ENCODE measurements at regions of chr17 and their contacts with region 1.

Region 1: DNA sequence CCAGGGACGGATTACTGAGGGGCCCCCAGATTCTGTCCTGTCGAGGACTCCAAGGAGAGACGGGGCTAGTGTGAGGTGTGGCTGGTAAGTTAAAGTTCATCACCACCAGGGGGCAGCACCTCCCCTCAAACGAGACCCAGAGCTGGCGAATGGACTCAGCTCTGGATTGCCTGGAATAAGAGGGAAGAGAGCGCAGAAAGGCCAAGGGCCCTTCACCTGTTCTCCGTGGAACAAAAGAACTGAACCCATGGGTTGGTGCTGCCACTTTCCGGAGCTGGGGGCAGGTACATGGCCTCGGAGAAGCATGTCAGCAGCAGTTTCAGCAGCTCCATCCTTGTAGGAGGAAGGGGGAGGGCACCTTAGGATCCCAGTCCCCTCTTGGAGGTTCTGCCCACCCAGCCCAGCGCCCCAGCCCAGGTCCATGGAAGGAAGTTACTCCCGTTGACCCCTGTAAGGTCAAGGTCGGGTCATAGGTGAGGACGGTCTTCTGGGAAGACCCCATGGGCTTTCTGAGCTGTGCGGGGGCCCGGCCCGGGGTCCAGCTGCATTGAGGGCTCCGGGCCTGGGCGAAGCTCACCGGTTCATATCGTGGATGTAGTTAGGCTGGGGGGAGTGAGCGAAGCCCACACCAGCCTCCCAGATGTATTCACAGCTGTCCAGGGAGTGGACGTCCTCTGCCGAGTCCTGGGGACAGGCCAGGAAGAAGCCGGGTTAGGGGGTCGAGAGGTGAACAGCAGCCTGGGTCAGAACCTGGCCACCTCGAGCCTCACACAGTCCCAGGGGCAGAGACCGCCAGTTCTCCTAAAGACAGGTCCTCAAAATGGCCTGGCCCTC is 10.7 kb downstream of the HID1 start:
- DNase-seq: peak; percentile 71
- ATAC-seq: peak; percentile 69
- H3K4me3 Mint-ChIP-seq: no peak overlapping the region
- H3K27ac Mint-ChIP-seq: no peak overlapping the region
- H3K4me1 Mint-ChIP-seq: peaks cover 9% of the 10 kb centered on the region
- H3K27me3 Mint-ChIP-seq: peaks cover 4% of the 10 kb centered on the region
- CTCF ChIP-seq: peak; percentile 58

Region 2: GRCh38 chr17:73595479-73595878 is 1366.4 kb before region 1 on chr17:
- CTCF ChIA-PET with region 1: no interaction called
- POLR2A ChIA-PET with region 1: no interaction called
- intact Hi-C with region 1: no loop called
- DNase-seq: peak; percentile 35
- ATAC-seq: no peak
- H3K4me3 Mint-ChIP-seq: no peak overlapping the region
- H3K27ac Mint-ChIP-seq: peak overlapping the region; percentile 90
- H3K4me1 Mint-ChIP-seq: peaks cover 84% of the 10 kb centered on the region
- H3K27me3 Mint-ChIP-seq: no peaks in the 10 kb centered on the region
- CTCF ChIP-seq: no peak

Region 3: DNA sequence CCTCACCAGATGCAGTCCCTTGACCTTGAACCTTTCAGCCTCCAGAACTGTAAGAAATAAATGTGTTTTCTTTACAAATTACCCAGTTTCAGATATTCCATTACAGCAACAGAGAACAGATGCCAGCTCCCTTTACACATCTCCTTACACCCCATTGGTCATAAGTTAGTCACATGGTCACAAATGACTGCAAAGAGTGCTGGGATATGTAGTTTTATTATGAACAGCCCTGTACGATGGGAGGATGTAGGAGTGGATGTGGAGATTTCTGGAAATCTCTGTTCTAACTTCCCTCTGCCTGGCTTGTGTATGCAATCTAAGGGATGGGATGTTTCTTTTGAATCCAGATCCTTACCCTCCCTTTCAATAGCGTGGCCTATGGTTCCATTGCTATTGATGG is 771.7 kb before region 1 on chr17:
- CTCF ChIA-PET with region 1: no interaction called
- POLR2A ChIA-PET with region 1: no interaction called
- intact Hi-C with region 1: no loop called
- DNase-seq: no peak
- ATAC-seq: peak; percentile 77
- H3K4me3 Mint-ChIP-seq: no peak overlapping the region
- H3K27ac Mint-ChIP-seq: no peak overlapping the region
- H3K4me1 Mint-ChIP-seq: no peaks in the 10 kb centered on the region
- H3K27me3 Mint-ChIP-seq: peaks cover 28% of the 10 kb centered on the region
- CTCF ChIP-seq: no peak

Region 4: GRCh38 chr17:74748529-74749365 is 213.1 kb before region 1 on chr17 and contains the start of gene NHERF1:
- CTCF ChIA-PET with region 1: interaction called, 3 read pairs
- POLR2A ChIA-PET with region 1: interaction called, 3 read pairs
- intact Hi-C with region 1: loop called (anchors 1 kb)
- DNase-seq: peak; percentile 97
- ATAC-seq: peak; percentile 96
- H3K4me3 Mint-ChIP-seq: peak within 1 kb of the TSS; percentile 89
- H3K27ac Mint-ChIP-seq: peak within 1 kb of the TSS; percentile 72
- H3K4me1 Mint-ChIP-seq: peaks cover 64% of the 10 kb centered on the region
- H3K27me3 Mint-ChIP-seq: no peaks in the 10 kb centered on the region
- CTCF ChIP-seq: no peak
- total RNA-seq, gene NHERF1: 33.3 and 34.5 TPM in 2 replicates

Region 5: DNA sequence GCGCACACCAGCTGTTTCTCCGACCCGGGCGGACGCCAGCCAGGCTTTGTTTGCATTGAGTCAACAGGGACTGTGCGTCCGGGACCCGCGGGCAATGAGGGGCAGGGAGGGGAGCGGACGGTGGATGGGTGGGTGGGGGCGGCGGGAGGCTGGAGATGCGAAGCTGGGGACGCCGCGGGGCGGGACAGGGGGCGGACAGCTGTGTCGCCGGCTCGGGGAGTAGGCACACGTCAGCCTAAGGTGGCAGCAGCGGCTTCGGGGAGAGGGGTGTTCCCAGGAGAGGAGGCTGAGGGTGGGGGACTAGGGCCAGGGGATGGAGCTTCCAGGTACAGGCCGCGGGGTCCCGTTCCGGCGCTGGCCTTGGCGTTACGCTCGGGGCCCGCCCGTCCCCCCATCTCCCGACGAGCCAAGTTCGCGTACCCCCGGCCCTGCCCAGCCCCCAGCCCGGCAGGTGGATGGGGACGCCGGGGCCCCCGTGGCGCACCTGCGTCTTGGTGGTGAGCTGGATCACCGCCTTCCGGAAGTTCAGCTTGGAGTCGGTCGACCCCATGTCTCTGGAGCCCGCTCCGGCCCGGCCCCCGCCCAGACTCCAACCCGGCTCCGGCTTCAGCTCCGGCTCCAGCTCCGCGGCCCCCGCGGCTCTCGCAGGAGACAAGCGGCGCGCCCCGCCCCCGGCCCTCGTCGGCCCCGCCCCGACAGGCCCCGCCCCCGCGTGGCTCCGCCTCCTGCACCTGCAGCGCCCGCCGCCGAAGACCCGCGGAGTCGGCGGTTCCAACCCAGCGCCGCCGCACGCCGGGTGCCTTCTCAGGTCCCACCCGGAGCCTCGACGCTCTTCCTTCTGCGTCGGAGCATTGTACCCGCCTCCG is 10.5 kb after region 1 on chr17 and contains the start of gene HID1:
- CTCF ChIA-PET with region 1: interaction called, 37 read pairs
- POLR2A ChIA-PET with region 1: interaction called, 9 read pairs
- intact Hi-C with region 1: no loop called
- DNase-seq: peak; percentile 69
- ATAC-seq: peak; percentile 92
- H3K4me3 Mint-ChIP-seq: peak within 1 kb of the TSS; percentile 76
- H3K27ac Mint-ChIP-seq: peak within 1 kb of the TSS; percentile 2
- H3K4me1 Mint-ChIP-seq: peaks cover 6% of the 10 kb centered on the region
- H3K27me3 Mint-ChIP-seq: peaks cover 19% of the 10 kb centered on the region
- CTCF ChIP-seq: no peak
- total RNA-seq, gene HID1: 1.5 and 2.1 TPM in 2 replicates

Region 6: GRCh38 chr17:75046582-75047289 is 84.9 kb after region 1 on chr17 and contains the starts of genes ATP5PD and KCTD2:
- CTCF ChIA-PET with region 1: interaction called, 12 read pairs
- POLR2A ChIA-PET with region 1: interaction called, 6 read pairs
- intact Hi-C with region 1: loop called (anchors 2 kb)
- DNase-seq: peak; percentile 91
- ATAC-seq: peak; percentile 95
- H3K4me3 Mint-ChIP-seq: peak within 1 kb of the TSS; percentile 97
- H3K27ac Mint-ChIP-seq: peak within 1 kb of the TSS; percentile 86
- H3K4me1 Mint-ChIP-seq: peaks cover 37% of the 10 kb centered on the region
- H3K27me3 Mint-ChIP-seq: no peaks in the 10 kb centered on the region
- CTCF ChIP-seq: no peak
- total RNA-seq, gene ATP5PD: 158 and 181 TPM in 2 replicates
- total RNA-seq, gene KCTD2: 19.5 and 20.2 TPM in 2 replicates

Region 7: GRCh38 chr17:75199886-75200618 is 238.2 kb after region 1 on chr17:
- CTCF ChIA-PET with region 1: interaction called, 78 read pairs
- POLR2A ChIA-PET with region 1: interaction called, 9 read pairs
- intact Hi-C with region 1: loop called (anchors 1 kb)
- DNase-seq: no peak
- ATAC-seq: no peak
- H3K4me3 Mint-ChIP-seq: no peak overlapping the region
- H3K27ac Mint-ChIP-seq: no peak overlapping the region
- H3K4me1 Mint-ChIP-seq: peaks cover 6% of the 10 kb centered on the region
- H3K27me3 Mint-ChIP-seq: no peaks in the 10 kb centered on the region
- CTCF ChIP-seq: no peak

Region 8: DNA sequence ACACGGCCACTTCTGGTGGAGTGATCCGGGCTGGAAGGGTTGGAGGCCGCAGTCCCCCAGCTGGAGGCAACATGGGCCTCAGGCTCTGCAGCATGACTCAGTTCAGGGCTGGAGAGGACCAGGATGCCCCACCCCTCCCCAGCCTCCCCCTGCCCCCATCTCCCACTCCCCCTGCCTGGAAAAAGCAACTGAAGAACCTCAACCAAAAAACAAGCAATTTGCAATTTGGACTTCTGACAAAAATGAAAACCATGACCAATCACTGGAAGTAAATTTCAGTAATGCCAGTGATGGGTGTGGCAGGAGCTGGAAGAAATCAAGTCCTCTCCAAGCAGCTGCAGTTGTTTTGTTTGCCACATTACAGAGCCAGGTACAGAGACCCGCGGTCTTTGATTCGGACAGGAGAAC is 315.8 kb after region 1 on chr17:
- CTCF ChIA-PET with region 1: no interaction called
- POLR2A ChIA-PET with region 1: no interaction called
- intact Hi-C with region 1: no loop called
- DNase-seq: no peak
- ATAC-seq: no peak
- H3K4me3 Mint-ChIP-seq: no peak overlapping the region
- H3K27ac Mint-ChIP-seq: no peak overlapping the region
- H3K4me1 Mint-ChIP-seq: peaks cover 1% of the 10 kb centered on the region
- H3K27me3 Mint-ChIP-seq: no peaks in the 10 kb centered on the region
- CTCF ChIP-seq: no peak

Region 9: GRCh38 chr17:75412455-75413317 is 450.8 kb after region 1 on chr17:
- CTCF ChIA-PET with region 1: interaction called, 16 read pairs
- POLR2A ChIA-PET with region 1: no interaction called
- intact Hi-C with region 1: loop called (anchors 1 kb)
- DNase-seq: peak; percentile 63
- ATAC-seq: peak; percentile 94
- H3K4me3 Mint-ChIP-seq: peak overlapping the region; percentile 53
- H3K27ac Mint-ChIP-seq: peak overlapping the region; percentile 63
- H3K4me1 Mint-ChIP-seq: peaks cover 12% of the 10 kb centered on the region
- H3K27me3 Mint-ChIP-seq: no peaks in the 10 kb centered on the region
- CTCF ChIP-seq: peak; percentile 9